ENCODE measurements at regions of chrX and their contacts with region 1.

Region 1: GRCh38 chrX:54495814-54496516 is at the start of gene FGD1:
- DNase-seq: peak; percentile 41
- ATAC-seq: peak; percentile 74
- H3K4me3 ChIP-seq: peak within 1 kb of the TSS; percentile 95
- H3K27ac ChIP-seq: peak within 1 kb of the TSS; percentile 90
- H3K4me1 ChIP-seq: peaks cover 7% of the 10 kb centered on the region
- H3K27me3 ChIP-seq: no peaks in the 10 kb centered on the region
- CTCF ChIP-seq: no peak
- POLR2A ChIP-seq: no peak
- RAD21 ChIP-seq: no peak
- total RNA-seq, gene FGD1: 2.0 and 2.5 TPM in 2 replicates

Region 2: GRCh38 chrX:54292755-54293154 is 203.2 kb before region 1 on chrX:
- CTCF ChIA-PET with region 1: no interaction called
- POLR2A ChIA-PET with region 1: no interaction called
- dilution Hi-C with region 1: no loop called
- in situ Hi-C with region 1: no loop called
- intact Hi-C with region 1: no loop called
- DNase-seq: no peak
- ATAC-seq: no peak
- H3K4me3 ChIP-seq: no peak overlapping the region
- H3K27ac ChIP-seq: no peak overlapping the region
- H3K4me1 ChIP-seq: no peaks in the 10 kb centered on the region
- H3K27me3 ChIP-seq: peaks cover 4% of the 10 kb centered on the region
- CTCF ChIP-seq: no peak
- POLR2A ChIP-seq: no peak
- RAD21 ChIP-seq: no peak

Region 3: DNA sequence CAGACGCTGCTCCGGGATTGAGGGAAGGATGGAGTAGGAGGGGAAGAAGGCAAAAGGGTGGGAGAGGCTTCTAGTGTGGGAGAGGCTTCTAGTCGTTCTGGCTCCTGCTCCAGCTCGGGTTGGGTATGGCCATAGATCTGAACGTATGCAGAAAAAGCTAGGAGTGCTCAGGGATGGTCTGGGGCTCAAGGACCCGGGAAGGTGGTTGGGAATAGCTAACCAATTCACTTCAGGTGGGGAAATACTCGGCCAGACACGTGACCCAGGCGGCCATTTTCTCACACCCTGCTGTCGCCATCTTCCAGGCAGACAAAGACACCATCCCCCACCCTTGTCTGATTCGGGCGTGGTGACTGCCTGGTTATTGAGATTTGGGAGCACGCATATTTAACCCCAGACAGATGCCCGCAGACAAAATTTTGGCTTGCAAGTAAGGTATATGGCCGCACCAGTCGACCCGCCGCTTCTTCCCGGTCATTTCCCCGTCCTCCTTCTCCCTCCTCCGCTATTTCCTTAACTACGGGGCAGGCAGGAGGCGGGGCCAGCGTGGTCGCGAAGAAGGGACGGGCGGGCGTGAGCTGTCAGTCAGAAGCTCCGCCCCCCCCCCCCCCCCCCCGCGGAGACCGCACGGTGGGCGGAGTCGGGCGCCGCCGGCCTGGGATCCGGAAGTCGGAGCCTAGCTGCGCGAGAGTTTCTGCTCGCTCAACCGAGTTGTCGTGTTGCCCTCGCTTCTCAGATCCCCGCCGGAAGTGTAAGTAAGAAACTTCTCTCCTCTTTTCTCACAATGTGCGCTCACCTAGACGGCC is 33.8 kb after region 1 on chrX and contains the start of gene GNL3L:
- CTCF ChIA-PET with region 1: no interaction called
- POLR2A ChIA-PET with region 1: no interaction called
- dilution Hi-C with region 1: no loop called
- in situ Hi-C with region 1: no loop called
- intact Hi-C with region 1: loop called (anchors 1 kb)
- DNase-seq: peak; percentile 79
- ATAC-seq: peak; percentile 90
- H3K4me3 ChIP-seq: peak within 1 kb of the TSS; percentile 98
- H3K27ac ChIP-seq: peak within 1 kb of the TSS; percentile 95
- H3K4me1 ChIP-seq: peaks cover 2% of the 10 kb centered on the region
- H3K27me3 ChIP-seq: no peaks in the 10 kb centered on the region
- CTCF ChIP-seq: no peak
- POLR2A ChIP-seq: peak; percentile 68; the same call in 1 of the 2 replicates
- RAD21 ChIP-seq: no peak
- total RNA-seq, gene GNL3L: 47.2 and 48.8 TPM in 2 replicates

Measured in IMR-90 (cell line).